ENCODE measurements at regions of chr6 and their contacts with region 1.

Region 1: GRCh38 chr6:156933201-156934068 is 156.3 kb downstream of the ARID1B start:
- DNase-seq: no peak
- H3K4me3 Mint-ChIP-seq: no peak overlapping the region
- H3K27ac Mint-ChIP-seq: peak overlapping the region; percentile 20
- H3K4me1 Mint-ChIP-seq: peaks cover 38% of the 10 kb centered on the region
- H3K27me3 Mint-ChIP-seq: no peaks in the 10 kb centered on the region

Region 2: DNA sequence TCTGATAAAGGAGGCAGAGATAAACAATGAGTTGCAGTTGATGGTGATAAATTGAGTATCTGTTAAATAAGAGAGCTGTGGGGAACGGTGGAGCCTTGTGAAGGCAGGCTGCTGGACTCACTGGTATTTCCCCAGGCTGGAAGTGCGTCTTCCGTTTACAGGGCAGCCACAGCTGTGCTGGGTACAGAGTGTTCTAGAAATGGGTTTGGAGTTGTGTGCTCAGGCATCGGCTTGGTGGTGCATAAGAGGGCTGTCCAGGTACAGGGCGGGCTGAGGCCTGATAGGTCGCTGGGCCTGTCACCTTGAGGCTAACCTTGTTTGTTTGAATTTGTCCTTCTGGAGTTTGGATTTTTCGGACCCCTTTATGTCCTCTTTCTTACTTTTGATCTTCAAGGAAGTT is 116.9 kb before region 1 on chr6:
- intact Hi-C with region 1: no loop called
- DNase-seq: no peak
- H3K4me3 Mint-ChIP-seq: no peak overlapping the region
- H3K27ac Mint-ChIP-seq: no peak overlapping the region
- H3K4me1 Mint-ChIP-seq: peaks cover 26% of the 10 kb centered on the region
- H3K27me3 Mint-ChIP-seq: no peaks in the 10 kb centered on the region

Region 3: DNA sequence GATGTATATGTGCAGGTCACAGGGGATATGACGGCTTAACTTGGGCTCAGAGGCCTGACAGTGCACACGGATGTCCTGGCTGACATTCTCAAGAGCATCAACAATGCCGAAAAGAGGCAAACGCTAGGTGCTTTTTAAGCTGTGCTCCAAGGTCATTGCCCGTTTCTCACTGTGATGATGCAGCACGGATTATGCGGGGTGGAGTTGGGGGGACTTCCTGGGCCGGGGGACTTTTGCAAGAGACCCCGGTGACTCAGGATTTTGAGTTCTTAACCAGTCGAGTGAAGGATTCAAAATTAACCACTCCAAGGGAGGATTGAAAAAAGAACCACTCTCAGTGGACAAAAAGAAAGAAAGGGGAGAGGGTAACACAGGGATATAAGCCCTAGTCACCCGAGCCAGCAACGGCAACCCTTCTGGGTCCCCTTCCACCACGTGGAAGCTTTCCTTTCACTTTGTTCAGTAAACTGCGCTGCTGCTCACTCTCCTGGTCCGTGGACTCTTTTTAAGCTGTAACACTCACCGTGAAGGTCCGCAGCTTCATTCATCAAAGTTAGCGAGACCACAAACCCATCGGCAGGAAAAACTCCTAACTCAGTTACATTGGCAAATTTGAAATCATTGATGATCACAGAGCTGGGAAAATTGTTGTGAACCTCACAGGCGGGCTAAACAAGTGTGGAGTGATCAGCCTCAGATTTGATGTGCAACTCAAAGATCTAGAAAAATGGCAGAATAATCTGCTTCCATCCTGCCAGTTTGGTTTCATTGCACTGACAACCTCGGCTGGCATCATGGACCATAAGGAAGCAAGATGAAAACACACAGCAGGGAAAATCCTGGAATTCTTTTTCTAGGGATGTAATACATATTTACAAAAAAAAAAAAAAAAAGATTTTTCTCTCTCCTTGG is 43.0 kb after region 1 on chr6:
- intact Hi-C with region 1: loop called (anchors 1 kb)
- DNase-seq: no peak
- H3K4me3 Mint-ChIP-seq: peak overlapping the region; percentile 74
- H3K27ac Mint-ChIP-seq: peak overlapping the region; percentile 83
- H3K4me1 Mint-ChIP-seq: peaks cover 50% of the 10 kb centered on the region
- H3K27me3 Mint-ChIP-seq: no peaks in the 10 kb centered on the region

Region 4: DNA sequence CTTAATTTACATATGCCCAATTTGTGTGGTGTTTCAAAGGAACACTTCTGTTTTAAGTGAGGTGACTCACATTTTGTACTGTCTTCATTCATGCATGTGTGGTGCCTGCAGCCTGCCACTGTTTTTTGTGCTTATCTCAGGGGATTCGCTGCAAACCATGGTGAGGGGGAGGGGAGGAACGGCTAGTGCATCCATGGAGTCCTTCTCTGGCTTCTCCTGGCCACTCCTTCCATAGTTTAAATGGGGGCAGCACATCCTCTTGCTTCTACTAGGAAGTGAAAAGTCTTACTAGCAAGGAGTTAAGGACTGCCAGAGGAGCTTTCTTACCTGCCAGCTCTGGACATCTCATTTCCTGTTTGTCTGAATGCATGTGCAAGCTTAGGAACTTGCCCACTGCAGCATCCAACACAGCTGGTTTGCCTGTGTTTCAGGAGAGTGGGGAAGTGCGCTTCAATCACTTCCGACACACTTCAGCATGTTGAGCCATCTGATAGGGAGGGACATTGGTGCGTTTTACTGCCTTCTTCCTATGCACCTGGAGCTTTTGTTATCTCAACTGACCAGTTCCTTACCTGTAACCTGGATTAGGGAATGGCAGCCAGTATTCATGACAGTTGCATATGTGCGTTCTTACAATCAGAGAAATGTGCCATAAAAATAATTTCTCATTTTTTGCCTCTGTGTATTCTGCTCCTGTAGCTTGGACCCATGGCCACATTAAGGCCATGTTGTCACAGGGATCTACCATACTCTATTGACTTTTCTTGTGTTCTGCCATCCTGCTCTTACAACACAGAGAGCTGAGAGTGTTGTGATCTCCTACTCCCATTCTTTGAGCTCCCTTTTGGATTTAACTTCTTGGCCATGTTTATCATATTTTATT is 55.1 kb after region 1 on chr6:
- intact Hi-C with region 1: no loop called
- DNase-seq: no peak
- H3K4me3 Mint-ChIP-seq: no peak overlapping the region
- H3K27ac Mint-ChIP-seq: no peak overlapping the region
- H3K4me1 Mint-ChIP-seq: peaks cover 35% of the 10 kb centered on the region
- H3K27me3 Mint-ChIP-seq: no peaks in the 10 kb centered on the region

Region 5: DNA sequence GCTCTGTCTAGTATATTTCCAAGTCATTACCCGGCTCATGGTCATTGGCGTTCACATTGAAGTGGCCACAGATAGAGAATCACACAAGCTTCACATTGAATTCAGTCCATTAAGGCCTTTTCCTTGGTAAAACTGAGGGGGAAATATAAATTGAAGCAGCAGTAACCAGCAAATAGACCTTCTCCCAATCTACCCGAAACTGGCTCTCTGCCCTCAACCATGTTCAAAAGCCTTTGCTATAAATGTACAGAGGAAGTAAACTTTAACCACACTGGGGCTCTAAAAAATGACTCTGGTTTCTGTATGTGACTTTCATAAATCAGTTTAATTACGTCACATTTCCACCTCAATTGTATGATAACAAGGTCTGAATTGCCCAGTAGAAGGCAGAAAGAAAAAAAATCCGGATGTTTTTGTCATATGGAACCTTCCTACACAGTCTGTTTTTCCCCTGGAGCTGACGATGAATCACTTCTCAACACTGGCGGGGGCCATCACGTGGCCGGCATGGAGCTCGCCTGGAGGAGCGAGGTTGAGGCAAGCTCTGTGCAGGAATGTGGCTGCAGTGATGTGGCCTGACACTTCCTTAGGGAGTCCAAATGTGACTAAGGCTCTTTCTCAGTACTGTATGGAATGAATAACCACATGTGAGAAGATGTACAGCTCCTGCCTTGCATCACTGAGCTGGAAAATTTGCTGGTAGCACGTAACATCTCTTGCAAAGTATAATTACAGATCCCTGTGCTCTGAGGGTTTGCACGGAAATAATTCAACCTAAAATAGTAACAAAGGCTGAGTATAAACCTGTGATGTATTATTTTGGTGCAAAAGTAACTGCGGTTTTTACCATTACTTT is 831.0 kb after region 1 on chr6:
- intact Hi-C with region 1: no loop called
- DNase-seq: peak; percentile 79
- H3K4me3 Mint-ChIP-seq: peak overlapping the region; percentile 43
- H3K27ac Mint-ChIP-seq: peak overlapping the region; percentile 86
- H3K4me1 Mint-ChIP-seq: peaks cover 65% of the 10 kb centered on the region
- H3K27me3 Mint-ChIP-seq: peaks cover 15% of the 10 kb centered on the region

Measured in activated T-helper 2 cell treated with anti-CD3 and anti-CD28 coated beads, Interferon-gamma antibody, Interleukin-2, Interleukin-4, amounts not matched to agents 10 μg/mL and 5 μg/mL and 100 μg/mL, durations not matched to agents 14 hours and 24 hours and 36 hours (primary cell).